Posterior vena cava (tissue), 2 donors: ENCODE measurements at regions of chr12 and their contacts with region 1.

Region 1: DNA sequence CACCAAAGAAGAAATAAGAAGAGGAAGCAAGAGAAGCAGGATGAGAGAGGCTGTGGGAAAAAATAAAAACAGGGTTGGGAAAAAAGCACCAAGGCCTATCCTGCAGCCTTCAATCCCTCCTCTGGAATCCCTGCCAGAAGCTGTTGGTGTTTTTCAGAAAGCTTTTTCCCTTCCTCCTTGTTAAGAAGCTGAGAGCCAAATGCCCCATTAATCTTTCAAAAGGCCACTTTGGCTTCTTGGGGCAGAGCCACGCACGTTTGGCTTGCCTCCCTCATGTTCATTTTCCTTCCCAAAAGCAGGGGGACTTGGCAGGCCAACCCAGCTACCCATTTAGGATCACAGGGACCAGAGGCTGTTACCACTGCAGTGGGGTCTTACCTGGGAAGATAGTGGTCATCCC is 365.3 kb downstream of the NUAK1 start:
- DNase-seq: no peak

Region 2: GRCh38 chr12:105138248-105138647 is 635.2 kb before region 1 on chr12:
- intact Hi-C with region 1: loop called in 1 of 2 experiments (anchors 5 kb)
- DNase-seq: no peak